Sciatic nerve (tissue), 2 donors: ENCODE measurements at regions of chr3 and their contacts with region 1.

Region 1: GRCh38 chr3:73950865-73951558 is 326.3 kb upstream of the PDZRN3 start:
- DNase-seq: no peak
- ATAC-seq: no peak

Region 2: DNA sequence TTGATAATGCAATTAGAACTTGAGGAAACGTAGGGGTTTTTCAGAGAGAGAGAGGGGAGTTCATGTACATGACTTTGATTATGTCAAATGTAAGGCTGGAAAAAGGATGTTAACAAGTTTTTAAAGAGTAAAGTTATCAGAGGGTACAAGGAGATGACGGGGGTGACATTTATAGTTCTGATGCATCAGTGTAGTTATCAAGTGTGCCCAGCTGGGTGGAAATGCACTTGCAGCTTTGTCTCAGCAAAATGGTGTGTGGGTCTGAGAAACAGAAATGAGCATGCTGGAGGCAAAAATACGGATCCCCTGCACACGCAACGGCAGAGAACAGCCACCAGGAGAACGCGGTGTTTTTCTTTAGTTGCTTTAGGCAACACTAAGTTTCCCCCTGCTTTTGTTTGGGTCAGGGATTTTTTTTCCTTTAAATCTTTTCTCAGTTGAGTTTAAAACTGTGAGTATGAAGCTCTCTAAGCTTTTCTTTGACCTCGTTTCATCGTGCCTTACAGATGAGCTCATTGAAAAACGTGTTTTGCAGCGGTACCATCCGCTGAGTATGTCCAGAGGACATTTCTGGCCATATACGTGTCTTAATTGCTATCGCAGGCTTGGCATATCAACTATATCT is 531.7 kb before region 1 on chr3:
- intact Hi-C with region 1: loop called (anchors 5 kb)
- DNase-seq: no peak
- ATAC-seq: peak; percentile 56

Region 3: GRCh38 chr3:73661265-73661664 is 289.7 kb before region 1 on chr3:
- intact Hi-C with region 1: no loop called
- DNase-seq: no peak
- ATAC-seq: no peak